T-cell (primary cell): ENCODE measurements at regions of chr6 and their contacts with region 1.

Region 1: GRCh38 chr6:155314092-155314772 is at the start of gene TFB1M:
- DNase-seq: peak; percentile 91 to 98 (median 94)
- ATAC-seq: peak; percentile 92 to 94 (median 93)
- H3K4me3 ChIP-seq: peak within 1 kb of the TSS; percentile 75 to 91
- H3K4me3 Mint-ChIP-seq: peak within 1 kb of the TSS; percentile 95 to 98 (median 95)
- H3K27ac ChIP-seq: peak within 1 kb of the TSS; percentile 78
- H3K27ac Mint-ChIP-seq: peak within 1 kb of the TSS; percentile 91 to 96
- H3K4me1 ChIP-seq: peaks cover 0 to 12% of the 10 kb centered on the region in 2 experiments
- H3K4me1 Mint-ChIP-seq: peaks cover 25 to 51% (median 47%) of the 10 kb centered on the region in 3 donors
- H3K27me3 ChIP-seq: no peaks in the 10 kb centered on the region
- H3K27me3 Mint-ChIP-seq: no peaks in the 10 kb centered on the region
- total RNA-seq, gene TFB1M: 19.9 to 31.1 (median 26.8) TPM

Region 2: GRCh38 chr6:155174576-155175211 is 139.5 kb before region 1 on chr6:
- CTCF ChIA-PET with region 1: interaction called in 1 of 2 experiments, 18 read pairs
- POLR2A ChIA-PET with region 1: no interaction called
- DNase-seq: peak; percentile 2 to 82 (median 40)
- ATAC-seq: peak; percentile 50 to 72 (median 65)
- H3K4me3 ChIP-seq: no peak overlapping the region
- H3K4me3 Mint-ChIP-seq: no peak overlapping the region
- H3K27ac ChIP-seq: no peak overlapping the region
- H3K27ac Mint-ChIP-seq: peak overlapping the region in 1 of 2 donors; percentile 16
- H3K4me1 ChIP-seq: peaks cover 0 to 10% of the 10 kb centered on the region in 2 experiments
- H3K4me1 Mint-ChIP-seq: peaks cover 19 to 36% (median 29%) of the 10 kb centered on the region in 3 donors
- H3K27me3 ChIP-seq: no peaks in the 10 kb centered on the region
- H3K27me3 Mint-ChIP-seq: no peaks in the 10 kb centered on the region

Region 3: GRCh38 chr6:155327326-155328073 is 13.3 kb after region 1 on chr6:
- CTCF ChIA-PET with region 1: interaction called, 8 to 32 read pairs
- POLR2A ChIA-PET with region 1: interaction called in 1 of 2 experiments, 6 read pairs
- DNase-seq: peak; percentile 12 to 82 (median 48)
- ATAC-seq: peak; percentile 40 to 71 (median 44)
- H3K4me3 ChIP-seq: no peak overlapping the region
- H3K4me3 Mint-ChIP-seq: no peak overlapping the region
- H3K27ac ChIP-seq: no peak overlapping the region
- H3K27ac Mint-ChIP-seq: peak overlapping the region in 1 of 2 donors; percentile 2
- H3K4me1 ChIP-seq: peaks cover 4 to 6% of the 10 kb centered on the region in 2 experiments
- H3K4me1 Mint-ChIP-seq: peaks cover 13 to 19% (median 14%) of the 10 kb centered on the region in 3 donors
- H3K27me3 ChIP-seq: peaks cover 0 to 3% of the 10 kb centered on the region in 2 experiments
- H3K27me3 Mint-ChIP-seq: no peaks in the 10 kb centered on the region